Heart left ventricle (tissue), 16 donors: ENCODE measurements at regions of chr11 and their contacts with region 1.

Region 1: GRCh38 chr11:85647604-85648299 is at the start of gene TMEM126A:
- DNase-seq: peak; percentile 89 to 94 (median 92)
- ATAC-seq: peak; percentile 97 to 99 (median 98)
- H3K4me3 ChIP-seq: peak within 1 kb of the TSS; percentile 54 to 90 (median 71)
- H3K27ac ChIP-seq: peak within 1 kb of the TSS in 11 of 12 donors; percentile 69 to 89 (median 85)
- H3K4me1 ChIP-seq: peaks cover 0 to 26% (median 18%) of the 10 kb centered on the region in 12 donors
- H3K27me3 ChIP-seq: no peaks in the 10 kb centered on the region
- CTCF ChIP-seq: no peak
- POLR2A ChIP-seq: peak; percentile 14 to 67
- total RNA-seq, gene TMEM126A: 36.3 to 77.9 (median 63.6) TPM

Region 2: GRCh38 chr11:85021058-85021457 is 626.7 kb before region 1 on chr11:
- intact Hi-C with region 1: no loop called
- DNase-seq: no peak
- ATAC-seq: no peak
- H3K4me3 ChIP-seq: no peak overlapping the region
- H3K27ac ChIP-seq: no peak overlapping the region
- H3K4me1 ChIP-seq: peaks cover 0 to 7% (median 0%) of the 10 kb centered on the region in 12 donors
- H3K27me3 ChIP-seq: no peaks in the 10 kb centered on the region
- CTCF ChIP-seq: no peak
- POLR2A ChIP-seq: no peak

Region 3: GRCh38 chr11:85664615-85665481 is 17.1 kb after region 1 on chr11 and contains the start of gene CREBZF:
- intact Hi-C with region 1: loop called in 2 of 10 experiments (anchors 2 kb)
- DNase-seq: peak; percentile 95 to 97 (median 95)
- ATAC-seq: peak; percentile 93 to 96 (median 96)
- H3K4me3 ChIP-seq: peak within 1 kb of the TSS; percentile 71 to 94 (median 88)
- H3K27ac ChIP-seq: peak within 1 kb of the TSS; percentile 92 to 99 (median 96)
- H3K4me1 ChIP-seq: peaks cover 0 to 42% (median 35%) of the 10 kb centered on the region in 12 donors
- H3K27me3 ChIP-seq: no peaks in the 10 kb centered on the region
- CTCF ChIP-seq: no peak
- POLR2A ChIP-seq: peak in 1 of 2 donors; percentile 95
- total RNA-seq, gene CREBZF: 11.8 to 17.8 (median 12.9) TPM

Region 4: DNA sequence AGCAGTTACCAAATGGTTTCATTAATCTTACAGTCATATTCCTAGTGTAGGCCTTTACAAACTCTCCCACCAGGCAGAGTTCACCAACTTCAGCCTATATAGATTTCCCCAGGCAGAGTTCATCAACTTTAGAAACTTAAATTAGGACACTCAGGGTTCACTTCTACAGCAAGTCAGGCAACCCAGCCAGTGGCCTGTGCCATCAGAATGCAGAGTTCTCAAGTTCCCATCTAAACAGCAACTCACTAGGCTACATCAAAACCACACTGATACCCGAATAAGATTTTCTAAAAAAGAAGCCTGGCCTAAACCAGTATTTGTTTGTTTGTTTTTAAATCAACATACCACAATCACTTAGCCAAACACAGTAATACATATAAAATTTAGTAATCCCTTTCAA is 387.4 kb after region 1 on chr11:
- intact Hi-C with region 1: no loop called
- DNase-seq: no peak
- ATAC-seq: no peak
- H3K4me3 ChIP-seq: no peak overlapping the region
- H3K27ac ChIP-seq: peak overlapping the region in 1 of 12 donors; percentile 8
- H3K4me1 ChIP-seq: peaks cover 6 to 68% (median 40%) of the 10 kb centered on the region in 12 donors
- H3K27me3 ChIP-seq: no peaks in the 10 kb centered on the region
- CTCF ChIP-seq: no peak
- POLR2A ChIP-seq: no peak